Naive thymus-derived CD4-positive, alpha-beta T cell (primary cell): ENCODE measurements at regions of chr14 and their contacts with region 1.

Region 1: GRCh38 chr14:51846631-51847488 is 13.6 kb upstream of the GNG2 start:
- DNase-seq: peak; percentile 69 to 98 (median 94)
- ATAC-seq: peak; percentile 87
- H3K4me3 ChIP-seq: peak overlapping the region; percentile 63
- H3K4me3 Mint-ChIP-seq: peak overlapping the region; percentile 55 to 96 (median 88)
- H3K27ac ChIP-seq: peak overlapping the region; percentile 96
- H3K27ac Mint-ChIP-seq: peak overlapping the region; percentile 97 to 100 (median 99)
- H3K4me1 ChIP-seq: peaks cover 23 to 43% of the 10 kb centered on the region in 2 donors
- H3K4me1 Mint-ChIP-seq: peaks cover 29 to 83% (median 74%) of the 10 kb centered on the region in 7 donors
- H3K27me3 ChIP-seq: no peaks in the 10 kb centered on the region
- H3K27me3 Mint-ChIP-seq: peaks cover 0 to 2% (median 0%) of the 10 kb centered on the region in 5 donors

Region 2: DNA sequence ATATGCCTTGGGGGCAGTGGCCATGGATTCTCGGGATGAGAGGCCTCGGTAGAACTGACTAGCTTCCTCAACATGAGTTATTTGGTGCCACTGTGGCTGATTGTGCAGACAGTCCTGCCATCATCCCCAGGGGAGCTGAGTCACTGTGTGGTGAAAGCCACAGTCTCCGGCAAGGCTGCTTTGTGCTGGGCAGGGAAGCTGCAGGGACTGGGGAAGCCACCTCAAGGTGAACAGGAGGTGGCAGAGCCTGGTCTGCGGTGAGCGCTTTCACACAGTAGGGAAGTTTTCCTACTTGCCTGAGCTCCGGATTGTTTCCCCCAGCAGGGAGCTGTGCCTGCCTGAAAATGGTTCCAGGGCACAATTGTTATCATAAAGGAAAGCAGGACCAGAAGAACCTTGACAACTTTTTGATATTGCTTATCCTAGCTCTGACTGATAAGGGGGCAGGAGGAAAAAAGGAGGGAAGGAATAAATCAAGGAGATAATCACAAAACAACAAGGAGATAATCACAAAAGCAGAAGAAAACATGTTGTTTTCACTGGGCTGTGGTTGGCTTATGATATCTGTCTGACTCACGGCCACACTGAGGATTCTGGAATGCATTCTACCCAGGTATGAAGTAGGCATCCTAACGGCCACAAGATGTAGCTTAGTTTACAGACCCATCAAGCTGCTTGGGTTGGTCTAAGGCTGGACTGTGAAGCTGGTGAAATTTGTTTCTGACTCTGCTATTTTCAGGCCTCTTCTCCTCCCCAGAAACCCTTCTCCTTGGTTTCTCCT is 18.7 kb before region 1 on chr14:
- CTCF ChIA-PET with region 1: interaction called, 3 read pairs
- POLR2A ChIA-PET with region 1: interaction called, 3 read pairs
- intact Hi-C with region 1: loop called in 1 of 2 experiments (anchors 2 kb)
- DNase-seq: peak in 5 of 9 donors; percentile 16 to 68 (median 28)
- ATAC-seq: peak; percentile 97
- H3K4me3 ChIP-seq: no peak overlapping the region
- H3K4me3 Mint-ChIP-seq: no peak overlapping the region
- H3K27ac ChIP-seq: no peak overlapping the region
- H3K27ac Mint-ChIP-seq: peak overlapping the region in 1 of 9 donors; percentile 2
- H3K4me1 ChIP-seq: peaks cover 4 to 6% of the 10 kb centered on the region in 2 donors
- H3K4me1 Mint-ChIP-seq: peaks cover 0 to 4% (median 0%) of the 10 kb centered on the region in 7 donors
- H3K27me3 ChIP-seq: no peaks in the 10 kb centered on the region
- H3K27me3 Mint-ChIP-seq: no peaks in the 10 kb centered on the region

Region 3: DNA sequence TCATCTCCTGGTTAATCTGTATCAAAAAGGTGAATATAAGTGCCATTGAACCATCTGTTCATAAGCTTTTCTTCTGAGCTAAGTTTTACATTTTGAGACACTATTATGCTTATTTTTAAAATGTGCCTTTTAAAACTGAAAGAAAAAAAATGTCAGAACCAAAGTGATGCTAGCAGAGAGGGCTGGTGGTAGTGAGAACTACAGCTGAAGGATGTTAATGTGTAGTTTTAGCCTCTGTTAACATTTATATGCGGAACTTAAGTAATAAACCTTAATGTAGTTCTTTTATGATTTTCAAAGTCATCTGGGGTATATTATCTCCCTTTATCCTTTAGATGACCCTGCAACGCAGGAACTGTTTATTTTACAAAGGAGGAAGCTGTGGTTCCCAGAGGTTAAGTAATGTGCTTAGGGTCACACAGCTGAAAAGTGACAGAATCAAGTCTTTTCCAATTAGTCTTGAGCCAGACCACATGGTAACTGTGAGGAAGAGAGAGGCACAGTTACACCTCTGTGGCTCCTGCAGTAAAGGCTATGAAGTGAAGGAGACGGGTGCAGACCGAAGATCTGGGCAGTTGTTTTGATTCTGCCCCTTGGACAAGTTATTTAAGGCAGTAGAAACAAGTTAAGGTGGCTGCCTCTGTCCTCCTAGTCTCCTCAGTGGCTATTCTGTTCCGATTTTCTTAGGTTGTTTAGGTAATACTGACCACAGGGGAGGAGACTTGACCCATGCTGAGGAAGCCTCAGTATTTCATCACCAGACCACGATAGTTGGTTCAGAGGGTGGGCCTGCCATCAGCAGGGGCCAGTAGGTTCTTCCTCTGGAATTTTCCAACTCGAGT is 37.4 kb after region 1 on chr14:
- CTCF ChIA-PET with region 1: interaction called, 5 read pairs
- POLR2A ChIA-PET with region 1: interaction called, 4 read pairs
- intact Hi-C with region 1: loop called in 1 of 2 experiments (anchors 1 kb)
- DNase-seq: no peak
- ATAC-seq: peak; percentile 79
- H3K4me3 ChIP-seq: no peak overlapping the region
- H3K4me3 Mint-ChIP-seq: peak overlapping the region in 9 of 10 donors; percentile 9 to 66 (median 43)
- H3K27ac ChIP-seq: peak overlapping the region; percentile 19
- H3K27ac Mint-ChIP-seq: peak overlapping the region; percentile 18 to 91 (median 82)
- H3K4me1 ChIP-seq: peaks cover 45 to 49% of the 10 kb centered on the region in 2 donors
- H3K4me1 Mint-ChIP-seq: peaks cover 50 to 95% (median 89%) of the 10 kb centered on the region in 7 donors
- H3K27me3 ChIP-seq: no peaks in the 10 kb centered on the region
- H3K27me3 Mint-ChIP-seq: no peaks in the 10 kb centered on the region

Region 4: DNA sequence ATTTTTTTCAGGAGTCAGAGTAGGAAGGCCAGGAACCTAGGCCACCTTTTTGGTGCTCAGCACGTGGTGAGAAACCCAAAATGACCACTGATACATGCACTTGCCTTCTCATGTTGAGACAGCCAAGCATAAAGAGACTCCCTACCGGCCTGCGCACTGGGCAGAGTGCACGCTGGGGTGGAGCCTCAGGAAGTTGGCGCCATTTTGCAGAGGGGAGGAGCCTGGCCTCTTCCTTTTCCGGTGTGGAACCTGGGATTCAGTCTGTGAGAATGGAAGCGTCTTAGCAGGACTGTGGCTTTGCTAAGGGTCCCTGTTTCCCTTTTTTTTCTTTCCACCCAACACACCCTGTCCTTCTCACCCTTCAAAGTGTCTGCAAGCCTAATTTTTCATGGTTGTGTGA is 79.6 kb after region 1 on chr14:
- CTCF ChIA-PET with region 1: no interaction called
- POLR2A ChIA-PET with region 1: no interaction called
- intact Hi-C with region 1: no loop called
- DNase-seq: no peak
- ATAC-seq: no peak
- H3K4me3 ChIP-seq: no peak overlapping the region
- H3K4me3 Mint-ChIP-seq: no peak overlapping the region
- H3K27ac ChIP-seq: no peak overlapping the region
- H3K27ac Mint-ChIP-seq: peak overlapping the region in 2 of 9 donors; percentile 19 to 21
- H3K4me1 ChIP-seq: peaks cover 26 to 31% of the 10 kb centered on the region in 2 donors
- H3K4me1 Mint-ChIP-seq: peaks cover 39 to 91% (median 80%) of the 10 kb centered on the region in 7 donors
- H3K27me3 ChIP-seq: no peaks in the 10 kb centered on the region
- H3K27me3 Mint-ChIP-seq: no peaks in the 10 kb centered on the region

Region 5: GRCh38 chr14:51963286-51963685 is 116.4 kb after region 1 on chr14:
- CTCF ChIA-PET with region 1: no interaction called
- POLR2A ChIA-PET with region 1: no interaction called
- intact Hi-C with region 1: loop called in 1 of 2 experiments (anchors 5 kb)
- DNase-seq: peak in 6 of 9 donors; percentile 17 to 64 (median 42)
- ATAC-seq: peak; percentile 70
- H3K4me3 ChIP-seq: no peak overlapping the region
- H3K4me3 Mint-ChIP-seq: peak overlapping the region in 9 of 10 donors; percentile 31 to 81 (median 71)
- H3K27ac ChIP-seq: peak overlapping the region; percentile 50
- H3K27ac Mint-ChIP-seq: peak overlapping the region; percentile 58 to 96 (median 83)
- H3K4me1 ChIP-seq: peaks cover 8 to 11% of the 10 kb centered on the region in 2 donors
- H3K4me1 Mint-ChIP-seq: peaks cover 27 to 56% (median 45%) of the 10 kb centered on the region in 7 donors
- H3K27me3 ChIP-seq: no peaks in the 10 kb centered on the region
- H3K27me3 Mint-ChIP-seq: no peaks in the 10 kb centered on the region

Region 6: GRCh38 chr14:52286661-52287649 is 440.1 kb after region 1 on chr14:
- CTCF ChIA-PET with region 1: no interaction called
- POLR2A ChIA-PET with region 1: no interaction called
- intact Hi-C with region 1: loop called in 1 of 2 experiments (anchors 1 kb)
- DNase-seq: peak in 5 of 9 donors; percentile 9 to 37 (median 24)
- ATAC-seq: peak; percentile 44
- H3K4me3 ChIP-seq: peak overlapping the region; percentile 4
- H3K4me3 Mint-ChIP-seq: peak overlapping the region; percentile 4 to 73 (median 60)
- H3K27ac ChIP-seq: no peak overlapping the region
- H3K27ac Mint-ChIP-seq: peak overlapping the region in 7 of 9 donors; percentile 3 to 91 (median 16)
- H3K4me1 ChIP-seq: peaks cover 21 to 22% of the 10 kb centered on the region in 2 donors
- H3K4me1 Mint-ChIP-seq: peaks cover 19 to 52% (median 27%) of the 10 kb centered on the region in 7 donors
- H3K27me3 ChIP-seq: no peaks in the 10 kb centered on the region
- H3K27me3 Mint-ChIP-seq: peaks cover 0 to 15% (median 0%) of the 10 kb centered on the region in 5 donors

Region 7: GRCh38 chr14:52729925-52730667 is 883.2 kb after region 1 on chr14 and contains the start of gene STYX:
- CTCF ChIA-PET with region 1: no interaction called
- POLR2A ChIA-PET with region 1: no interaction called
- intact Hi-C with region 1: loop called in 1 of 2 experiments (anchors 5 kb)
- DNase-seq: peak; percentile 91 to 97 (median 94)
- ATAC-seq: peak; percentile 99
- H3K4me3 ChIP-seq: peak within 1 kb of the TSS; percentile 88
- H3K4me3 Mint-ChIP-seq: peak within 1 kb of the TSS; percentile 87 to 95 (median 94)
- H3K27ac ChIP-seq: peak within 1 kb of the TSS; percentile 94
- H3K27ac Mint-ChIP-seq: peak within 1 kb of the TSS; percentile 84 to 97 (median 89)
- H3K4me1 ChIP-seq: peaks cover 14 to 16% of the 10 kb centered on the region in 2 donors
- H3K4me1 Mint-ChIP-seq: peaks cover 18 to 40% (median 33%) of the 10 kb centered on the region in 7 donors
- H3K27me3 ChIP-seq: no peaks in the 10 kb centered on the region
- H3K27me3 Mint-ChIP-seq: no peaks in the 10 kb centered on the region
- total RNA-seq, gene STYX: 23.9 to 45.3 (median 29.2) TPM